Activated CD4-positive, alpha-beta memory T cell treated with anti-CD3 and anti-CD28 coated beads for 36 hours (primary cell): ENCODE measurements at regions of chr20 and their contacts with region 1.

Region 1: DNA sequence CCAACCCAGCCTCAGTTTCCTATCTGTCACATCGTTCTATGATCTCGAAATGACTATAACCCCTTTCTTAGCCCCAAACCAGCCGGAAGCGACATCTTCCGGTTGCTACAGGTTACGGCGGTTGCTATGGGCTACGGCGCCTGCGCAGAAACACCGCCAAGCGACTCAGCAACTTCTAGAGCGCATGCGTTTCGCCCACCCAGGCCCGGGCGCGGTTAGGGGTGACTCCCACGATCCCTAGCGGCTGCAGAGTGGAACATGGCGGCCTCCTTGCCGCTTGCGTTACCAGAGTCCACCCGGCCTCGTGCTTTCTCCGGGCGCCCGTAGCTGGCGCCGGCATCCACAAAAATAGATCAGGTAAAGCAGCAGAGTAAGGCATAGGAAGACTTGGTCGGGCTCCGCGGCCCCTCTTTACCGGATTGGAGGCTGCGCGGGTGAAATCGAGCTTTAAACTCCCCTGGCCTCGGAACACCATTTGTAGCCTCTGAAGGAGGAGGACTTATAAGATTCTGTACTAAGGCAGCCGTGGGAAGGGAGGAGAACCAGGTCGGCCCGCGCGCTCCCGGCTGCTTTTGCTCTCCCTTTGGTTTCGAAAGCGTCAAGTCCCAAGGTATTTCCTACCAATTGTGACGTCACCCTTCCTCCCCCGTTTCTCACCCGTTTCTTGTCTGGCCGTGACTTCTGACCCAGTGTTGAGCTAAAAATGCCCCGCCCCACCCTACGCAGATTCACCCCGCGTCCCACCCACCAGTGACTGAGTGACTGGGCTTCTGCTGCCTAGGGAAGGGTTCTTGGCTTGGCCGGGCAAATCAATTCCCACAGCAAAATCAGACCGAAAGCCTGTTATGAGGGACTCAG is 3.5 kb downstream of the SDCBP2 start:
- DNase-seq: peak; percentile 99
- H3K4me3 Mint-ChIP-seq: no peak overlapping the region
- H3K27ac Mint-ChIP-seq: no peak overlapping the region
- H3K4me1 Mint-ChIP-seq: peaks cover 23% of the 10 kb centered on the region
- H3K27me3 Mint-ChIP-seq: no peaks in the 10 kb centered on the region

Region 2: GRCh38 chr20:1313236-1313964 is 12.0 kb before region 1 on chr20:
- CTCF ChIA-PET with region 1: interaction called, 15 read pairs
- POLR2A ChIA-PET with region 1: no interaction called
- intact Hi-C with region 1: no loop called
- DNase-seq: peak; percentile 70
- H3K4me3 Mint-ChIP-seq: no peak overlapping the region
- H3K27ac Mint-ChIP-seq: no peak overlapping the region
- H3K4me1 Mint-ChIP-seq: peaks cover 13% of the 10 kb centered on the region
- H3K27me3 Mint-ChIP-seq: no peaks in the 10 kb centered on the region

Region 3: GRCh38 chr20:1377984-1378734 is 52.8 kb after region 1 on chr20:
- CTCF ChIA-PET with region 1: interaction called, 3 read pairs
- POLR2A ChIA-PET with region 1: interaction called, 8 read pairs
- intact Hi-C with region 1: loop called (anchors 1 kb)
- DNase-seq: peak; percentile 66
- H3K4me3 Mint-ChIP-seq: peak overlapping the region; percentile 34
- H3K27ac Mint-ChIP-seq: peak overlapping the region; percentile 95
- H3K4me1 Mint-ChIP-seq: peaks cover 84% of the 10 kb centered on the region
- H3K27me3 Mint-ChIP-seq: no peaks in the 10 kb centered on the region

Region 4: DNA sequence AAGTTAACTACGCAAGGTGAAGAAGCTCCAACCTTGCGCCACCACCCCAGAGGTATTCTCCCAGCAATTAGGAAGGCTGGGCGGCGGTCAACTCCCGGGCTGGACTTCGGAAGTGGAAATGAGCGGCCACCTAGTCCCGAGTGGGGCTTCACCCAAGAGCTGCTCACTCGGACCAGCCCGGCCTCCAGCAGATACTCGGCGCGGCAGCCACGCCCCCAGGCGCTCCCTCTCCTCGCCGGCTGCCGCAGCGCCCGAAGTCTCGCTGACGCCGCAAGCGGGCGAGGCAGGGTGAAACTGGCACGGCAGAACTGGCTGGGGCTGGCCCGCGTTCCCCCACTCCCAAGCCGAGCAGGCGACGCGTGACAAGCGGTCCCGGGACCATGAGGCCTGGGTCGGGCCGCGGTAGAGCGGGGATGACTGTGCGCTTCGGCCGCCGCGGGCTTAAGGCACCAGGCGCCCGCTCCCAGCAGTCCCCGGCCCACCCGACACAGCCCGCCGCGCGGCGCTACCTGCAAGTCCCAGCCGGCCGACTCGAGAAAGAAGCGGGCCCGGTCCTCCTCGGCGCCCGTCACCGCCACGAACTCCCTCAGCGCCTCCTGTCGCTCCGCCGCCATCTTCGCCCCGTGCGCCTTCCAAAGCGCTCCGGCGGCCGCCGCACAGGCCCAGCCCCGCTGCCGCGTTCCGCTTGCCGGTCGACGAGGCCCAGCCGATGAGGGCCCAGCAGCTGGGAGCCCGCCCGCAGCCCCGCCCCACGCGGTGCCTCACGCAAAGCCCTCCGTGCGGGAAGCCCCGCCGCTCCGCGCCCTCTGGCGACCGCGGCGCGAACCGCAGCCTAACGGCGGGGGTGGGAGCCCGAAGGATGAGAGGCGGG is 141.0 kb after region 1 on chr20 and contains the start of gene NSFL1C:
- CTCF ChIA-PET with region 1: interaction called, 8 read pairs
- POLR2A ChIA-PET with region 1: interaction called, 3 read pairs
- intact Hi-C with region 1: loop called (anchors 1 kb)
- DNase-seq: peak; percentile 98
- H3K4me3 Mint-ChIP-seq: peak within 1 kb of the TSS; percentile 82
- H3K27ac Mint-ChIP-seq: peak within 1 kb of the TSS; percentile 77
- H3K4me1 Mint-ChIP-seq: peaks cover 38% of the 10 kb centered on the region
- H3K27me3 Mint-ChIP-seq: peaks cover 6% of the 10 kb centered on the region
- total RNA-seq, gene NSFL1C: 81.8 to 83.1 TPM

Region 5: DNA sequence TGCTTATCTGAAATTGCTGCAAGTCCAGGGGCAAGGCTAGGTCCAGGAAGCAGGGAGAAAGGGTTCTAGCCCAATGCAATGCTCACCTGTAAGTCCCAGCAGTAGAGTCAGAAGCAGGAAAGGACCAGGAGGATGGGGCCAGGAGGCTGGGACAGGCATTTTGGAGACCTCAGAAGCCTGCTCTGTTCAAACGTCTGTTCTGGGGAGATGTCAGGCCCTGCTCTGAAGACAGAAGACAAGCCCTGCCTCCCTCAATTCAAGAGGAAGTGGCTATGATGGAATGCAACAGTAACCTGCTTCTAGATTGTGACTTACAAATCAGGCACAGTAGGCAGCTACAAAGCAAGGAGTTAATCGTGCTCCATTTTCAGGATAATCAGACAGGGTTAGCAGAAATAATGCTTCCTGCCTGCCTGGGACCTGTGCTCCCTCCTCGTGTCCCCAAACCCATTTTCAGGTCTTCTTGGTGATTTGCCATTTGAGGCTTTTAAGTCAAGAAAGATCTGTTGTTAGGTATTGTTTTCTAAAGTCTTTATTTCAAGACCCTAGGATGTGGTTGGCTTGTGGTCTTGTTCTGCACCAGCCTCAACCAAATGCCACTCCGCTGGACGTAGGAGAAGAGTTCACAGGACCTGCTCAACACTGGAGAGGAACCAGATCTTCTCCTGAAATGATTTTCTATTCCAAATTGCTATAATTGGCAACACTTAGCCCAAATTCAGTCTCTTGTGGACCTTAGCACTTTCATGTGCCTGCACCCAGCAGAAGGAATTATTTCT is 332.3 kb after region 1 on chr20 and contains the start of gene SIRPG:
- CTCF ChIA-PET with region 1: no interaction called
- POLR2A ChIA-PET with region 1: no interaction called
- intact Hi-C with region 1: loop called (anchors 5 kb)
- DNase-seq: peak; percentile 63
- H3K4me3 Mint-ChIP-seq: peak within 1 kb of the TSS; percentile 84
- H3K27ac Mint-ChIP-seq: peak within 1 kb of the TSS; percentile 99
- H3K4me1 Mint-ChIP-seq: peaks cover 86% of the 10 kb centered on the region
- H3K27me3 Mint-ChIP-seq: no peaks in the 10 kb centered on the region
- total RNA-seq, gene SIRPG: 27.9 to 28.5 TPM